RWPE1 (cell line): ENCODE measurements at regions of chr1 and their contacts with region 1.

Region 1: DNA sequence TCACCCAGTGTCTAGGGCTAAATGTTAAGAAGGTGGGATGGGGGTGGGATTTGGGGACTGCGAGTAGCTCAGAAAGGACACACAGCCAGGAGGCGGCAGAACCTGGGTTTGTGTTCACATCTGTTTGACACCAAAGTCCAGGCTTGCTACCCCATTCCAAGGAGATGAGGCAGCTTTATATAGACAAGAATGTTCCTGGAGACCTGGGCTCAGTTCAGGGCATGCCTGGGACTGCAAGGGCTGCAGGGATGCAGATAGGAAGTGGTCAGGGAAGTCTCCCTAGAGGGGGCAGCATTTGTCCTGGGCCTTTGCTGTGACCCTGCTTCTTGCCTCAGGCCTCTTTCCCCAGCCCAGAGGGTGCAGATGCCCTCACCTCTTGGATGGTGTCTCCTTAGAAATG is 16.3 kb downstream of the PADI3 start:
- DNase-seq: peak; percentile 68
- H3K27ac ChIP-seq: peak overlapping the region; percentile 85
- CTCF ChIP-seq: no peak; the same call in 1 of the 2 replicates

Region 2: GRCh38 chr1:17080880-17081279 is 184.3 kb before region 1 on chr1:
- CTCF ChIA-PET with region 1: no interaction called
- POLR2A ChIA-PET with region 1: interaction called, 15 read pairs
- DNase-seq: no peak
- H3K27ac ChIP-seq: no peak overlapping the region
- CTCF ChIP-seq: no peak